PC-9 (cell line): ENCODE measurements at regions of chr5 and their contacts with region 1.

Region 1: GRCh38 chr5:34699155-34700077 is 43.3 kb downstream of the RAI14 start:
- DNase-seq: peak in 1 of 2 experiments; percentile 76
- H3K4me3 ChIP-seq: no peak overlapping the region
- H3K27ac ChIP-seq: peak overlapping the region; percentile 16; the same call in 1 of the 2 replicates
- H3K4me1 ChIP-seq: peaks cover 46% of the 10 kb centered on the region
- H3K27me3 ChIP-seq: no peaks in the 10 kb centered on the region
- CTCF ChIP-seq: no peak

Region 2: DNA sequence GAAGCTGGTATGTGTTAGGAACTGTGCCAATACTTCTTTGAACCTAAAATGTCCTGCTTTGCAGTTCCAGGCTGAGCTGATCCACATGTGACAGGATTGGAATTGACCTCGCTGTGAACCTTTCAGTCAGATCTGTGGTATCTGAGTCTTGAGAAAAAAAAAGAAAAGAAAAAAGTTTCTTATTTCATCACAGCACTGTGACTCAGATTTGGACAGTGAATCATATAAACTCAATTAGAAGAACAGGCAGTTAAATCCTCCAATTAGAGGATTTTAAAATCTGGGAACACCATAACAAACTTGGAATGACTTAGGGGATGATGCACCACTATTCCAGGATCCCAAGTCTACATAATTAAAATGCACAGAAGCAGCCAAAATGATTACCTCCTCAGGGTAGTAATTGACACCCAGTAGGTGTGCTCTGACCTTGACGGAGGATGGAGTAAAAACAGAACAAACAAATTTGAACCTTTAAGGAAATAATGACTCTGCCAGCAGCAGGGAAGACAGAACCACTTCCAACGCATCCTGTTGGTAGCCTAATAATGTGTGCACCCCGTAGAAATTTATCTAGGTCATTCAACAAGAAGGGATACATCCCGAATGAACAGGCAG is 101.1 kb before region 1 on chr5:
- CTCF ChIA-PET with region 1: no interaction called
- POLR2A ChIA-PET with region 1: no interaction called
- intact Hi-C with region 1: no loop called
- DNase-seq: peak; percentile 69 to 98
- H3K4me3 ChIP-seq: peak overlapping the region; percentile 6; the same call in 1 of the 2 replicates
- H3K27ac ChIP-seq: peak overlapping the region; percentile 88
- H3K4me1 ChIP-seq: peaks cover 43% of the 10 kb centered on the region
- H3K27me3 ChIP-seq: no peaks in the 10 kb centered on the region
- CTCF ChIP-seq: no peak

Region 3: GRCh38 chr5:34709861-34710673 is 10.7 kb after region 1 on chr5:
- CTCF ChIA-PET with region 1: no interaction called
- POLR2A ChIA-PET with region 1: interaction called, 17 read pairs
- intact Hi-C with region 1: loop called (anchors 1 kb)
- DNase-seq: peak; percentile 49 to 62
- H3K4me3 ChIP-seq: no peak overlapping the region
- H3K27ac ChIP-seq: peak overlapping the region; percentile 30
- H3K4me1 ChIP-seq: peaks cover 12% of the 10 kb centered on the region
- H3K27me3 ChIP-seq: no peaks in the 10 kb centered on the region
- CTCF ChIP-seq: no peak

Region 4: GRCh38 chr5:34771064-34771463 is 71.6 kb after region 1 on chr5:
- CTCF ChIA-PET with region 1: no interaction called
- POLR2A ChIA-PET with region 1: no interaction called
- intact Hi-C with region 1: no loop called
- DNase-seq: peak in 1 of 2 experiments; percentile 57
- H3K4me3 ChIP-seq: no peak overlapping the region
- H3K27ac ChIP-seq: no peak overlapping the region
- H3K4me1 ChIP-seq: peaks cover 18% of the 10 kb centered on the region
- H3K27me3 ChIP-seq: no peaks in the 10 kb centered on the region
- CTCF ChIP-seq: no peak

Region 5: DNA sequence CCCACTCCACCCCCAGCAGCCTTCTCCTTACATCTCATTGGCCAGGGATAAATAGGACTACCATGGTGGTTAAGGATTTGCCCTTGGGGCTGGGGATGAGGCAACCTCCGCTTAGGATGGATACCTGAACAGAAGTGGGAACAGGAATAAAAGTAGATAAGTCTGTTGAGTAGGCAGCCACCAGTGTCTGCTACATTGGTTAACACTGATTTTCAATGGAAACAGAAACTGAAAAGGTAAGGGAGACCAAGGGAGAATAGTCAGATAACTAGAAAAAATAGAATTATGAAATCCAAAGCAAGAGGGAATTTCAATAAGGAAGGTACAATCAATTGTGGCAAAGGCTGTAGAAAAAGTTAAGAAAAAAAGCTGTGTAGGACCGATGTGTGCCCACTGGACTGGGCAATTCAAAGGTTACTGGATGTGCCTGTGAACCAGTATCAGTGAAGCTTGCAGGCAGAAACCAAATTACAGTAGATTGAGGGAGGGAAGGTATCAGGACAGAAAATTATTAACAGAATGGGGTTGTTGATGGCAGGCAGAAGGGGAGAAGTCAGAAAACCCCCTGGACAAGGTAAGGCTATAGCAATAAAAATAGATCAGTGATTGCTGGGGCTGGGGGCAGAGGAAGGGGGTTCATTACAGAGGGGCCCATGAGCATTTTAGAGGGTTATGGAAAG is 278.7 kb after region 1 on chr5:
- CTCF ChIA-PET with region 1: no interaction called
- POLR2A ChIA-PET with region 1: no interaction called
- intact Hi-C with region 1: no loop called
- DNase-seq: no peak
- H3K4me3 ChIP-seq: no peak overlapping the region
- H3K27ac ChIP-seq: no peak overlapping the region
- H3K4me1 ChIP-seq: no peaks in the 10 kb centered on the region
- H3K27me3 ChIP-seq: peaks cover 40% of the 10 kb centered on the region
- CTCF ChIP-seq: no peak